GM12878 (cell line): ENCODE measurements at regions of chr4 and their contacts with region 1.

Region 1: DNA sequence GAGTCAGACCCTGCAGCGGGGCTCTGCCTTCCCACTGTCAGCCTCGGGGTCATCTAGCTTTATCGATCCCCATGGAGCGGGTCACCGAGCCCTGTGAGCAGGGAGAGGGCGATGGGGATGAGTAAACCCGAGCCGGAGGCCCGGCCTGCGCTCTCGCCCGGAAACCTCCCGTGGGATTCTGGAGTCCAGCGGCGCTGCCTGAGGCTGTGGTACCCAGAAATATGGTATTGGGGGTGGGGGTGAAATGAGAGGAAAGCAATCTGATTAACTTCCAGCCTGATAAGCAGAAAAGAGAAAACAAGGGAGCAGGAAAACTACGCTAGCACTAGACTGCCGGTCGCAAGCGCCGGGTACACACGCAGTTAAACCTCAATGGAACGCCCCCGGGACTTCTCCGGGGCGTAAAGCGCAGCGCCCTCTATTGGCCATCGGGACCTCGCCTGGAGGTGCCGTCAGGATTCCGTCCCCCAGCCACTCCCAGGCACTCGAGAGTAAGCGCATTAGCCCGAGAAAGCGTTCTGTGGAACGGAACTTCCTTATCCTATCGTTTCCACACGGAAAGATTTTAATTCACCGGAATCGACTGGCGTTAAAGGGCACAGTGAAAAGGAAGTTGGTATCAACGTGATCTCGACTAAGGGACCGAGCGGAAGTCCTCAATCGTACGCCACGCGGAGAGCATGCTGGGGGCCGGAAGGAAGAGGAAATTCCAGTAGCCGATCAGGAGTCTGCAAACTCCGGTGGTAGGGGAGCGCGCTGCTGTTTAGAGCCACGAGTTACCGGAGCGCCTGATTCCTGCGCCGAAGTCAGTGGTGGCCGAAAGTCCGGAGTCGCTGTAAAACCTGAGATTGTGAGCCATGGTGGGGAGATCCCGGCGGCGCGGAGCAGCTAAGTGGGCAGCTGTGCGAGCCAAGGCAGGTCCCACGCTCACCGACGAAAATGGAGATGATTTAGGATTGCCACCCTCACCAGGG is at the start of gene UTP3:
- DNase-seq: peak; percentile 95
- ATAC-seq: peak; percentile 93
- H3K4me3 ChIP-seq: peak within 1 kb of the TSS; percentile 90
- H3K27ac ChIP-seq: peak within 1 kb of the TSS; percentile 94
- H3K4me1 ChIP-seq: peaks cover 3% of the 10 kb centered on the region; the same call in 1 of the 2 replicates
- H3K27me3 ChIP-seq: no peaks in the 10 kb centered on the region
- CTCF ChIP-seq: peak; percentile 94 to 100 (median 97)
- EP300 ChIP-seq: no peak; a peak in 1 of 4 replicates
- POLR2A ChIP-seq: peak; percentile 89
- RAD21 ChIP-seq: peak; percentile 75
- polyA plus RNA-seq, gene UTP3: 15.8 to 21.1 TPM

Region 2: GRCh38 chr4:70601422-70602039 is 86.6 kb before region 1 on chr4:
- CTCF ChIA-PET with region 1: interaction called, 5 read pairs
- POLR2A ChIA-PET with region 1: no interaction called
- RAD21 ChIA-PET with region 1: no interaction called
- SMC1A ChIA-PET with region 1: interaction called, 11 read pairs
- in situ Hi-C with region 1: no loop called
- intact Hi-C with region 1: no loop called
- DNase-seq: peak; percentile 34
- ATAC-seq: peak; percentile 98
- H3K4me3 ChIP-seq: no peak overlapping the region
- H3K27ac ChIP-seq: no peak overlapping the region
- H3K4me1 ChIP-seq: no peaks in the 10 kb centered on the region
- H3K27me3 ChIP-seq: no peaks in the 10 kb centered on the region; a peak in 1 of 4 replicates
- CTCF ChIP-seq: peak; percentile 90 to 94 (median 92)
- EP300 ChIP-seq: no peak
- POLR2A ChIP-seq: no peak
- RAD21 ChIP-seq: peak; percentile 99

Region 3: GRCh38 chr4:70651864-70652506 is 36.1 kb before region 1 on chr4:
- CTCF ChIA-PET with region 1: interaction called, 11 read pairs
- POLR2A ChIA-PET with region 1: interaction called, 4 read pairs
- RAD21 ChIA-PET with region 1: interaction called, 14 read pairs
- SMC1A ChIA-PET with region 1: interaction called, 17 read pairs
- in situ Hi-C with region 1: no loop called
- intact Hi-C with region 1: loop called (anchors 1 kb)
- DNase-seq: no peak
- ATAC-seq: peak; percentile 68
- H3K4me3 ChIP-seq: no peak overlapping the region
- H3K27ac ChIP-seq: no peak overlapping the region
- H3K4me1 ChIP-seq: no peaks in the 10 kb centered on the region
- H3K27me3 ChIP-seq: no peaks in the 10 kb centered on the region
- CTCF ChIP-seq: peak; percentile 20 to 60 (median 52); a peak in 4 of 6 replicates
- EP300 ChIP-seq: no peak
- POLR2A ChIP-seq: no peak
- RAD21 ChIP-seq: peak; percentile 72

Region 4: DNA sequence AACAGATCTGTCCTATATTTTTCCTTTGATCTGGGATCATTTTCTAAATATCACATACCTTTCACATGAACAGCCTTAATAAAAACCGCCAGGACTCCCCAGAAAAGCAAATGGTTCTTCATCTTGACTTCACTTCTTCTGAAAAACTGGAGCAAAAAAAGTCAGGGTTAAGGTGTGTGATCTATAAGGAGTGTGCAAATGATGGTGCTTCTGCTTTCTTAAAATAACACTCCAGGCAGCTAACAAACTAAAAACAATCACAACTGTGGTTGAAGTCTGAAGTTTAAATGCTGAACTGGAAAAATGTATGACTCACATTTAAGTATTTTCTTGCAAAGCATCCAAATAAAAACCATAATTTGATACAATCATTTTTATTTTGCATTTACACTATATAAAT is 21.7 kb before region 1 on chr4 and contains the start of gene JCHAIN:
- CTCF ChIA-PET with region 1: interaction called, 6 read pairs
- POLR2A ChIA-PET with region 1: interaction called, 4 read pairs
- RAD21 ChIA-PET with region 1: interaction called, 7 read pairs
- SMC1A ChIA-PET with region 1: interaction called, 170 read pairs
- in situ Hi-C with region 1: no loop called
- intact Hi-C with region 1: no loop called
- DNase-seq: no peak
- ATAC-seq: peak; percentile 63
- H3K4me3 ChIP-seq: peak within 1 kb of the TSS; percentile 58
- H3K27ac ChIP-seq: peak within 1 kb of the TSS; percentile 48
- H3K4me1 ChIP-seq: peaks cover 9% of the 10 kb centered on the region
- H3K27me3 ChIP-seq: no peaks in the 10 kb centered on the region
- CTCF ChIP-seq: no peak
- EP300 ChIP-seq: peak in 1 of 2 experiments; percentile 53; a peak in 1 of 4 replicates
- POLR2A ChIP-seq: no peak
- RAD21 ChIP-seq: no peak
- polyA plus RNA-seq, gene JCHAIN: 617 to 1,045 TPM

Region 5: DNA sequence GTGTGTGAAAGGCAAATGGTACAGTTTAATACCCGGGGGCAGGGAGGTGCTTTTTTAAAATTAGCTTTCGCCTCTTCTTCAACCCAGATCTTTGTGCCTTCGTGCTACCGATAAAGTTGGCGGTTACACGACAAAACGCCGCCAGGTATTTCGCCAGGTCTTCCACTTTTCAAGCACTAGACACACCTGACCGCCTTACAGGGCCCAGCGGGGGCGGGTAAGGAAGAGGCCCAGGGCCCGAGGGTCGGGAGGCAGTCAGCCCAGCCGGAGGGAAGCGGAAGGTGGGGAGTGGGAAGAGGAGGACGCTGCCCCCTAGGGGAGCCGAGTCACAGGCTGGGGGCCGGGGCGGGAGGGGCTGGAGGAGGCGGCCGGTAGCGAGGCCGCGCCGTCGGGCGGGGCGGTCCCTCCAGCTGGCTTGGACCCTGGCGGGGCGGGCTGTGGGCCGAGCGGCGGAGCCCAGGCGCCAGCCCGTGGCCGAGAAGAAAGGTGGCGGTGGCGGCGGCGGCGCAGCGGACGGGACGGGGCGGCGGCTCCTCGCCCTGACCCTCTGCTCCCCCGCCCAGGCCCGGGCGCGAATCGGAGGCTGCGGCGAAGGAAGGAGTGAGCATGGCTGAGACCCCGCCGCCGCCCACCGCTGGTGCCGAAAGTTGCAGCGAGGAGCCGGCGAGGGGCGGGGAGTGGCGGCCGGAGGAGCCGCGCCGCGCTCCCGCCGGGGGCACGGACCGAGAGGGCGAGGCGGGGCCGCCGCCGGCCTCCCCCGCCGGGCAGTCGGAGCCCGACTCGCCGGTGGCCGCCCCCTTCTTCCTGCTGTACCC is 16.4 kb after region 1 on chr4:
- CTCF ChIA-PET with region 1: interaction called, 68 read pairs
- POLR2A ChIA-PET with region 1: interaction called, 52 read pairs
- RAD21 ChIA-PET with region 1: interaction called, 71 read pairs
- SMC1A ChIA-PET with region 1: interaction called, 77 read pairs
- in situ Hi-C with region 1: no loop called
- intact Hi-C with region 1: loop called (anchors 2 kb)
- DNase-seq: no peak
- ATAC-seq: peak; percentile 77
- H3K4me3 ChIP-seq: peak overlapping the region; percentile 92
- H3K27ac ChIP-seq: peak overlapping the region; percentile 50
- H3K4me1 ChIP-seq: no peaks in the 10 kb centered on the region; the same call in 1 of the 2 replicates
- H3K27me3 ChIP-seq: no peaks in the 10 kb centered on the region
- CTCF ChIP-seq: peak; percentile 28 to 47 (median 47); a peak in 4 of 6 replicates
- EP300 ChIP-seq: no peak
- POLR2A ChIP-seq: peak; percentile 18; the same call in 1 of the 2 replicates
- RAD21 ChIP-seq: peak; percentile 32; the same call in 1 of the 2 replicates

Region 6: GRCh38 chr4:70754470-70754869 is 66.4 kb after region 1 on chr4:
- CTCF ChIA-PET with region 1: interaction called, 10 read pairs
- POLR2A ChIA-PET with region 1: interaction called, 4 read pairs
- RAD21 ChIA-PET with region 1: interaction called, 9 read pairs
- SMC1A ChIA-PET with region 1: interaction called, 9 read pairs
- in situ Hi-C with region 1: no loop called
- intact Hi-C with region 1: no loop called
- DNase-seq: no peak
- ATAC-seq: peak; percentile 82
- H3K4me3 ChIP-seq: peak overlapping the region; percentile 59; the same call in 1 of the 2 replicates
- H3K27ac ChIP-seq: peak overlapping the region; percentile 79
- H3K4me1 ChIP-seq: peaks cover 36% of the 10 kb centered on the region
- H3K27me3 ChIP-seq: no peaks in the 10 kb centered on the region
- CTCF ChIP-seq: no peak
- EP300 ChIP-seq: peak; percentile 49 to 85; a peak in 3 of 4 replicates
- POLR2A ChIP-seq: no peak
- RAD21 ChIP-seq: no peak

Region 7: GRCh38 chr4:70993181-70994068 is 305.3 kb after region 1 on chr4 and contains the start of gene DCK:
- CTCF ChIA-PET with region 1: interaction called, 5 read pairs
- POLR2A ChIA-PET with region 1: no interaction called
- RAD21 ChIA-PET with region 1: interaction called, 5 read pairs
- SMC1A ChIA-PET with region 1: interaction called, 3 read pairs
- in situ Hi-C with region 1: no loop called
- intact Hi-C with region 1: loop called (anchors 10 kb)
- DNase-seq: no peak
- ATAC-seq: peak; percentile 87
- H3K4me3 ChIP-seq: peak within 1 kb of the TSS; percentile 95
- H3K27ac ChIP-seq: peak within 1 kb of the TSS; percentile 82
- H3K4me1 ChIP-seq: 0 out of 2 replicates have a peak, but pooled peaks cover 3% of the 10 kb centered on the region
- H3K27me3 ChIP-seq: no peaks in the 10 kb centered on the region
- CTCF ChIP-seq: no peak
- EP300 ChIP-seq: no peak
- POLR2A ChIP-seq: peak; percentile 94
- RAD21 ChIP-seq: no peak
- polyA plus RNA-seq, gene DCK: 20.0 to 26.7 TPM

Region 8: DNA sequence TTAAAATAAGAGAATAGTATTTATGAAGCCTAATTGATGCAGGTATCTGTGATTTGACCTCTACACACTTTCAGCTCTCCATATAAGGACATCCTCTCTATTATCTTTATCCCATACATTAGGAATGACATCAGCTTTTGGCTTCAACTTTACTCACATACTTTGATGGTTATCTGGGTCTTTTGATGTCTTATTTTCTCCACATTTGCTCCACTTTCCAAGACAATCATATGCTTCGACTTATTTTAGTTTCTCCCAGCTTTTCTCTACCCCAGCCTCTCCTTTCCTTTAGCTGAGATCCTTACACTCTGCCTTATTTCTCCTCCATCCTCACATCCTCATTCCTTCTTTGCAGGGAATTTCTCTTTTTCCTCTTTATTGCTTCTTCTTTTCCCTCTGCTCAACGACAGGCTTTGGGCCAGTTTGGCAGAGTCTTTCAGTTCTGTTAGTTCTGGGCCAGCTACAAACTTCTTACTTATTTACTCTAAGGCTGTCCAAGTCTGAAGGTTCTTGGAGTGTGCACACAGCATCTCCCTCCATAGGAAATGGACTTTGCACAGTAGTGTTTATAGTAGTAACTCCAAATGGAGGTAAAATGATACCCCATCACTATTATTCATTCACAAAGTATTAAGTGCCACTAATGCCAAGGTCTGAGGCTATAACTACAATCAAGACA is 701.2 kb after region 1 on chr4:
- CTCF ChIA-PET with region 1: no interaction called
- POLR2A ChIA-PET with region 1: no interaction called
- RAD21 ChIA-PET with region 1: no interaction called
- SMC1A ChIA-PET with region 1: no interaction called
- in situ Hi-C with region 1: no loop called
- intact Hi-C with region 1: no loop called
- DNase-seq: no peak
- ATAC-seq: no peak
- H3K4me3 ChIP-seq: no peak overlapping the region
- H3K27ac ChIP-seq: no peak overlapping the region
- H3K4me1 ChIP-seq: no peaks in the 10 kb centered on the region
- H3K27me3 ChIP-seq: no peaks in the 10 kb centered on the region
- CTCF ChIP-seq: no peak
- EP300 ChIP-seq: no peak
- POLR2A ChIP-seq: no peak
- RAD21 ChIP-seq: no peak